Caco-2 (cell line): ENCODE measurements at regions of chr2 and their contacts with region 1.

Region 1: GRCh38 chr2:207320381-207321159 is 154.8 kb upstream of the KLF7 start:
- DNase-seq: no peak
- H3K4me3 ChIP-seq: no peak overlapping the region
- H3K4me3 Mint-ChIP-seq: no peak overlapping the region
- H3K27ac Mint-ChIP-seq: no peak overlapping the region
- H3K4me1 ChIP-seq: no peaks in the 10 kb centered on the region
- H3K4me1 Mint-ChIP-seq: no peaks in the 10 kb centered on the region
- H3K27me3 ChIP-seq: no peaks in the 10 kb centered on the region
- H3K27me3 Mint-ChIP-seq: peaks cover 8% of the 10 kb centered on the region
- CTCF ChIP-seq: peak in 1 of 2 experiments; percentile 2

Region 2: DNA sequence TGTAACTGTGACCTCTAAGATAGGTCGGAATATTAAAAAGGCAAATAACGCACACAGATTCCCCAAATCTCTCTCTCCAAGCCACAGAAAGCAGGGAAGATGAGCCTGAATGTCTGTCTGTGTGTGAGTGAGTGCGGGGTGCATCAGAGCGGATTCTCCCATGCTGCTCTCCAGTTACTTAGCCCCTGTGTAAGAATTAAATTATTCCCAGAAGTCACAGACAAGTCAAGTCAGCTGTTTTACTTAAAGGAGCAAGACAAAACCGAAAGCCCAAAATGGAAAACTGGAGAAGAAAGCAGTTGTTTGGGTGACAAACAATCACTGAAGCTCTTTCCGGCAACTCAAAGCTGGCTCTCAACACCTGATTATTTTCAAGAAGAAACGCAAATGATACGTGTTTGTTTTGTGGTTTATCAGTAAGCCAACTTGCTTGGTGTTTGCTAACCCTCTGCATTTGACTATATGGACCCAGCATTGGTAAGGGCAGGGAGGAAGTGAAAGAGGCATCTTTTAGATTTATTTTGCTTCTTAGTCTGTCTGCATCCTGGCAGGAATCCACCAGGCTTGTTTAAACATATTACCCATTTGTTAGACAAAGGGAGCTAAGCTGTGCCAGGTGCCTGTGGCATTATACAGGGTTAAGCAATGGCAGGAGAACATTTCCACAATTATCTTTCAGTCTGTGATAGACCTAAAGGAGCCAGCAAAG is 87.7 kb after region 1 on chr2:
- CTCF ChIA-PET with region 1: no interaction called
- POLR2A ChIA-PET with region 1: interaction called, 11 read pairs
- intact Hi-C with region 1: no loop called
- DNase-seq: no peak
- H3K4me3 ChIP-seq: no peak overlapping the region
- H3K4me3 Mint-ChIP-seq: no peak overlapping the region
- H3K27ac Mint-ChIP-seq: no peak overlapping the region
- H3K4me1 ChIP-seq: no peaks in the 10 kb centered on the region
- H3K4me1 Mint-ChIP-seq: no peaks in the 10 kb centered on the region
- H3K27me3 ChIP-seq: no peaks in the 10 kb centered on the region
- H3K27me3 Mint-ChIP-seq: peaks cover 10% of the 10 kb centered on the region
- CTCF ChIP-seq: no peak